Right ventricle myocardium superior (tissue), 1 donor: ENCODE measurements at regions of chr3 and their contacts with region 1.

Region 1: GRCh38 chr3:123449102-123449996 is 459 bp upstream of the ADCY5 start:
- DNase-seq: peak; percentile 56
- ATAC-seq: peak; percentile 70

Region 2: DNA sequence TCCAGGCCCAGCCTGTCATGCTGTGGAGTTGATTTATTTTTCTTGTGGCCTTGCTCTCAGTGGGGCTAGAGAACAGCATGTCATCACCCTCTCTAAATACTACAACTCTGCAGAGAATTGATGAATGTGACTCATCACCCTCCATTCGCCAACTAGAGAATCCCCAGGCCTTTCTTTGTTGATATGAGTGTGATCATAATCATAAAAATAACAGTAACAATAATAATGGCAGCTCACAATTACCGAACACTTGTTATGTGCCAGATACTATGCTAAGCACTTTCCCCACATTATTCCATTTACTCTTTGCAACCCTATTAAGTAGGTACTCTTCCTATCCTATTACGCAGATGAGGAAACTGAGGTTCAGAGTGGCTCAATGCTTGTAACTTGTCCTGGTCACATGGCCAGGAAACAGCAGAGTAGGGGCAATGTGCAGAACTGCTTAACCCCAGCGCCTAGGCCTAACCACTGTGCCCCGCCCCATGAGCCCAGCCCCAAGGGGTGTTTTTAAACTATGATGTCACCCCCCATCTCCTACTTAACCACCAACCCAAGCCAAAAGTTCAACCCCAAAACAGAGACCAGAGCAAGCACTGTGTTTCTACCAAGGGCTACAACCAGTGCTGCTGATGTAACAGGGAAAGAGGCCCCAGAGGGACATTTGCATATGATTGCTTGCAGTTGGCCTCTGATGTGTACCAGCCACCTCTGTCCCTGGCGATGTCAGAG is 105.0 kb before region 1 on chr3:
- intact Hi-C with region 1: no loop called
- DNase-seq: peak; percentile 20
- ATAC-seq: peak; percentile 24

Region 3: DNA sequence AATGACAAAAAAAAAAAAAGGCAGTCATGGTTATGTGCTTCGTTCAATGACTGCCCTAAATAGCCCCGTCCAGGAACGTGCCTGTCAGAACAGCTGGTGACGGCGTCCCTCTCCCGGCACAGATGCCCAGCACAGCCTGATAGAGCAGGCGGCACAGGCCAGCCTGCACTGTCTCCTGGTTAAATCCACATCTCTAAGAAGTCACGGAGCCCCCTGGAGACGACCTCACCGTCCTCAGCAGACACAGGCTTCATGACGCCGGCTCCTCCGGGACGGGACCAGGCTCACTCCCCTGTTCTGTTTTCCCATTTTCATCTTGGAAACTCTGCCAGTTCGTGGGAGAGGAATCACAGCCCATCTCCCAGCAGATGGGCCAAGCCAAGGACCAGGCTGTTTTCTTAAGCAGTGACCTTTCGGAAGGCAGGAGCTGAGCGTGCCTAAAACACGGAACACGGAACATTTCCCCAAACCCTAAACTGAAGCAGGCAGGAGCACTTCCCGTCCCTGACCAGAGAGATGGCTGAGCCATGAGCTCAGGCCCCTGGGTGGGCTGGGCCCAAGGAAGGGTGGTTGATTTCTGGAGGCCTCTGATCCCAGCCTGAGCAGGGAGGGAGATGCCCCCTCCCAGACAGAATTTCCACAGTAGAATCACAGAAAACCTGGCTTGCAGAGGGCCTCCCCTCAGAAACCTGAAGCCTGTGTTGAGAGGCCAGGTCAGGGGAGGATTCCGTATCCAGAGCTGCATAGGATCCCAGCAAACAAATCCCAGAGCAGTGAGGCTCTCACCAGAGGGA is 36.3 kb before region 1 on chr3:
- intact Hi-C with region 1: loop called (anchors 5 kb)
- DNase-seq: peak; percentile 66
- ATAC-seq: peak; percentile 77